Gastrocnemius medialis (tissue), 4 donors: ENCODE measurements at regions of chr3 and their contacts with region 1.

Region 1: DNA sequence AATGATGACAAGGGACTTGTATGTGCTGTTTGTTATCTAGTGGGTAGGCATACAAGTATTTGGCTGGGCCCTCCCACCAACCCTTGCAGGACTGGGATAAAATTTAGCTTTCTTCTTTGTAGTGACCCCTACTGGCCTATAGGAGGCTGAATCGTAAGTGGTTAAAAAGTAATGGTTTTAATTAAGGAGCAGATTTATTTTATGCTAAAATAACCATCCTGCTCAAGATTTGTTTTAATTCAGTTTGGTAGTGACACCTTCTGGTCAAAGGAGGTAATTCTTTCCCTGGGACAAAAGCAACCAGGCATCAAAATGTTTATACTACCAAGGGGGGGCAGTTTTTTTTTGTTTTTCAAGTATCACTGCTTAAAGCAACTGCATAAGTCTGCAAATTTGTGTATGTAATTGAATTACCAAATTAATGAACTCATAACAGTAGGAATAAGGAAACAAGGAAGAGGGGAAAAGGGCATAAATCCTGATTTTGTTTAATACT is 70.7 kb downstream of the TOP2B start:
- DNase-seq: no peak
- ATAC-seq: peak in 1 of 2 donors; percentile 45
- H3K4me3 ChIP-seq: no peak overlapping the region
- H3K27ac ChIP-seq: no peak overlapping the region
- H3K4me1 ChIP-seq: peaks cover 14 to 33% of the 10 kb centered on the region in 2 donors
- H3K27me3 ChIP-seq: no peaks in the 10 kb centered on the region
- CTCF ChIP-seq: peak; percentile 66 to 83 (median 77)
- POLR2A ChIP-seq: no peak

Region 2: GRCh38 chr3:24773798-24774197 is 820.3 kb before region 1 on chr3:
- in situ Hi-C with region 1: loop called (anchors 10 to 25 kb)
- intact Hi-C with region 1: loop called (anchors 1 kb)
- DNase-seq: no peak
- ATAC-seq: peak; percentile 61 to 62
- H3K4me3 ChIP-seq: no peak overlapping the region
- H3K27ac ChIP-seq: no peak overlapping the region
- H3K4me1 ChIP-seq: no peaks in the 10 kb centered on the region
- H3K27me3 ChIP-seq: no peaks in the 10 kb centered on the region
- CTCF ChIP-seq: peak; percentile 37 to 72 (median 66)
- POLR2A ChIP-seq: no peak

Region 3: DNA sequence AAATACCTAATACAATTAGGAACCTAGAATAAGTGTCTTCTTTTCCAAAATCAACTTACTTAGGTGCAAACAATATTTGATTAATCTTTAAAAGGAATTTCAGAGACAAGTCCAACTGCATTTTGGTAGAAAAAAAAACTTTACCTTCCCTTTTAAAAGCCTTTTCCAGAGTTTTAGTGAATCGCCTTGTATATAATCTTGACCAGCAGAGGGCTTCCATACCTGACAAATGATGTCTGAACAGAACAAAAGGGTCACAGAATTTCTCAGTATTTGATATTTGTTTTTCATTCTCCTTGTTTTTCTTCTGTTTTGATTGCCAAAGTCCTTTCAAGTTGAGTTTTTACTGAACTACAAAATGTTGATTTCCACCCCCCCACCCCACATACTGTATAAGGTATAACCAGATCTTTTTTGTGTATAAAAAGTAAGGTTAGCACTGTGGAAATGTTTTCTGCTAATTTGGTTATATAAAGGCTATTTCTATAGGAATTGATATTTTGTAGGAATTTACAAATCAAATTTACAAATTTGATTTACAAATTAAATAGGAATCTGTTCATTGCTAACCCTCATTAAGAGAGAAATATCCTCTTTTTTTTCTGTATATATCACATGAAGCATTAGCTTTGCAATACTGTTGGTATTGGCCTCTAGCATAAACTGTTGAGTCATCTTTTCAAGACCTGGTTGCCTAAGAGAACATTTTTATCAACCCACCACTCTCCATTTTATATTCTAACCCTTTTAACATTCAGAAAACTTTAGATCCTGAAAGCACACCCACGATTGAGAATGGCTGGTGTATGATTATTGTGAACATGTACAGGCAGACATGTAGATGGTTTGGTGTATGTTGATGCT is 630.1 kb before region 1 on chr3:
- in situ Hi-C with region 1: loop called in 1 of 4 experiments (anchors 25 kb)
- intact Hi-C with region 1: loop called (anchors 5 kb)
- DNase-seq: no peak
- ATAC-seq: no peak
- H3K4me3 ChIP-seq: no peak overlapping the region
- H3K27ac ChIP-seq: no peak overlapping the region
- H3K4me1 ChIP-seq: no peaks in the 10 kb centered on the region
- H3K27me3 ChIP-seq: no peaks in the 10 kb centered on the region
- CTCF ChIP-seq: peak in 4 of 5 experiments; percentile 12 to 46 (median 28)
- POLR2A ChIP-seq: no peak

Region 4: DNA sequence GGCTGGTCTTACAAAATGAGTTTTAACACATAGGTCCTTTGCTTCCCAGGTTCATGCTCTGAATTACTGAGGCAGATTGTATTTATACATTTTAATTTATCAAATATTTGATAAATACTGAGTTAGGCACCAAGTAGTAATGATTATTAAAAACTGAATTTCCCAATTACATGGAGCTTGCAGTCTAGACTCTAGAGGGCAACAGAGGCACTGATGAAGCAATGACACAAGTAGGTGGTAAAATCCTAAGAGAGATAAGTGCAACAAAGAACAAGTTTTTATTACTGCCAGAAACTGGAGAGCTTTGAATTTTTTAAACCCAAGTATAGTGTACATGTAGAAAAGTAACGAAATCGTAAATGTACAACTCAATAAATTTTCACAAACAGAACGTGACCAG is 572.2 kb before region 1 on chr3:
- in situ Hi-C with region 1: loop called in 2 of 4 experiments (anchors 10 to 25 kb)
- intact Hi-C with region 1: no loop called
- DNase-seq: no peak
- ATAC-seq: no peak
- H3K4me3 ChIP-seq: no peak overlapping the region
- H3K27ac ChIP-seq: no peak overlapping the region
- H3K4me1 ChIP-seq: no peaks in the 10 kb centered on the region
- H3K27me3 ChIP-seq: no peaks in the 10 kb centered on the region
- CTCF ChIP-seq: peak in 2 of 5 experiments; percentile 35 to 42
- POLR2A ChIP-seq: no peak

Region 5: DNA sequence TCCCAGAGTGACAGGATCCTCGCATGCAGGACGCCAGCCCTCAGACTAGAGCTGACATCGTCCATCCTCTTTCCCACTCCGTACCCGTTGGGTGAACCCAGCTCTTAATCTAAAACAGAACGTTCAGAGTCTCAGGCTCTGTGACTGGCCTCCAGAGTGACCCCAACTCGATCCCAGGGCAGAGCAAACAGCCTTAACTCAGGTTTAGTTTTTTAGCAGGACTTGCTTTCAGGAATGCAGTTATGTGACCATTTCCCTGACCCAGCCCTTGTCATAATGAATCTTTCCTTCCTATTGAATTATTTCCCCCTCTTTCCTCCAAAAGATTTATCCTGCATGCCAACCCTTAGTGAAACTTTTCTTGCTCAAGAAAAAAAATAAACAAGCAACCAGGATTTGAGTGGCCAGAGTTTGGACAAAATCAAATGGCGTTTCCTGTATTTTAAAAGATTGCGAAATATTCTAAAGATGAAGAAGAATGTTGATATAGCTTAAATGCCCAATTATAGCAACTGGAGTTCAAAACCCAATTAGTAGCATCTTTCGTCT is 213.8 kb before region 1 on chr3:
- in situ Hi-C with region 1: no loop called
- intact Hi-C with region 1: no loop called
- DNase-seq: no peak
- ATAC-seq: no peak
- H3K4me3 ChIP-seq: no peak overlapping the region
- H3K27ac ChIP-seq: no peak overlapping the region
- H3K4me1 ChIP-seq: no peaks in the 10 kb centered on the region
- H3K27me3 ChIP-seq: no peaks in the 10 kb centered on the region
- CTCF ChIP-seq: no peak
- POLR2A ChIP-seq: no peak

Region 6: GRCh38 chr3:25427942-25428788 is 165.9 kb before region 1 on chr3 and contains the start of gene RARB:
- in situ Hi-C with region 1: loop called in 2 of 4 experiments (anchors 10 kb)
- intact Hi-C with region 1: loop called (anchors 2 kb)
- DNase-seq: peak; percentile 40 to 64
- ATAC-seq: peak; percentile 88 to 94
- H3K4me3 ChIP-seq: peak within 1 kb of the TSS; percentile 64 to 83 (median 72)
- H3K27ac ChIP-seq: peak within 1 kb of the TSS; percentile 80 to 88 (median 82)
- H3K4me1 ChIP-seq: peaks cover 19 to 20% of the 10 kb centered on the region in 2 donors
- H3K27me3 ChIP-seq: no peaks in the 10 kb centered on the region
- CTCF ChIP-seq: no peak
- POLR2A ChIP-seq: peak; percentile 70 to 83
- total RNA-seq, gene RARB: 1.2 to 3.0 (median 1.9) TPM

Region 7: DNA sequence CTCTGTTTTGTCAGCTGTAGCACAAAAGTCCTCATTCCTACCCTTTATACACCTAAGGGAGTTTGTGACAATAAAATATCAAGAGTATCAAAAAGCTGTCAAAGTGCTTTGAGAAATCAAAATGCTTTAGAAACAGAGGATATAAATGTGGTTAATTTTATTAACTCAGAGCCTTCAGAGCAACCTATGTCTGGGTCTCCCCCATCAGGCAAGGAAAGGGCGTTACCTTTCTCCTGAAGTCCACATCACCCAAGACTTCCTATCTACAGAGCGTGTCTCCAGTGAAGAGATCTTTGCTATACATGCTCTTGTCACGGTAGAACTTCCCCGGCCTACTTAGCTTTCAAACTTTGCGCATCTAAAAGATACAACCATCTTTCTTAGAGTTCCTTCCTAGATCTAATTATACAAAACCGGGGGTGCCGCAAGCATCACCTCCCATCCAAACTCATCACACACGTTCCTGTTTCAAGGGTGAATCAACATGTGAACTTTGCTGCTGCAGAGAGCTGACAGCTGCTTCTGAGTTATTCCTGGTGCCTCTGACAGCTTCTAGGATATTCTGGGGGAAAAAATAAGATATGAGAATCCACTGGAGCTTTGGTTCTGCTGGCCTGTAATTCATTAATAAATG is 73.0 kb before region 1 on chr3:
- in situ Hi-C with region 1: no loop called
- intact Hi-C with region 1: loop called (anchors 5 kb)
- DNase-seq: no peak
- ATAC-seq: no peak
- H3K4me3 ChIP-seq: no peak overlapping the region
- H3K27ac ChIP-seq: no peak overlapping the region
- H3K4me1 ChIP-seq: peaks cover 0 to 3% of the 10 kb centered on the region in 2 donors
- H3K27me3 ChIP-seq: no peaks in the 10 kb centered on the region
- CTCF ChIP-seq: no peak
- POLR2A ChIP-seq: no peak